ENCODE measurements at regions of chr15 and their contacts with region 1.

Region 1: DNA sequence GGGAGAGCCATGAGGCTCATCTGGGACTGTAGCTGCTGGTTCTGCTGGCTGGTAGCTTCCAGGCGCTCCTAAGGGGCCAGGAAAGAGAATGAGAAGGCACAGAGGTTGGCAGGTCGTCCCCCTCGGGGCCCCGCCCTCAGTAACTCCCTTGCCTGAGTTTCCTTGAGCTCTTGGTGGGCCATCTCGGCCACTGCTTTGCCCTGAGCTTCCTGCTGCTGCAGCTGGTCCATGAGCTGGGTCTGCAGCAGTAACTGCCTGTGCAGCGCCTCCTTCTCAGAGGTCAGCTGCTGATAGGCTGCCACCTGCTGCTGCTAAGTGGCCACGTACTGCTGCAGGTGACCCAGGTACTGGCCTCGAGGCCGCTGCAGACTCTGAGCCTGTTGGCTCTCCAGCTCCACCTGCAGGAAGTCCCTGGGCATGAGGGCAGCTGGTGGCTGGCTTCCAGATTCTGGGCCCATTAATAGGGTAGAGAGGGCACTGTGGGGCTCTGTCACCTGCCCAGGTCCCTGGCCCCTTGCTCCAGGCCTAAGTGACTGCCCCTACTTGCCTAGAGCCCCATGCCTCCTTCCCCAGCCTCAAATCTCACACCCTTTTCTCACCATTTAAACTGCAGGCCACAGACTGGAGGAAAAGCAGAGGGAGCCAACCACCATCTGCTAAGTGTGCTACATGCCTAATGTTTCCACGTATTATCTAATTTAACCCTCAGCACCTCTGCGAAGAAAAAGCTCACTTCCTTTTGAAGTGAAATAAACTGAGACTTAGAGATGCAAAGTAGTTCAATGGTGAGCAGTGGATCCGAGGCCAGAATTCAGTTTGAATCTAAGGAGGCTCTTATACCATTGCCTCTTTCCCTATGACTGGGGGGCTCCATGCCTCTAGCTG is 10.8 kb upstream of the VPS33B start:
- DNase-seq: peak; percentile 76
- ATAC-seq: peak; percentile 89
- H3K4me3 Mint-ChIP-seq: no peak overlapping the region
- H3K27ac Mint-ChIP-seq: no peak overlapping the region
- H3K4me1 Mint-ChIP-seq: no peaks in the 10 kb centered on the region
- H3K27me3 Mint-ChIP-seq: no peaks in the 10 kb centered on the region
- CTCF ChIP-seq: peak; percentile 61

Region 2: GRCh38 chr15:91007266-91007665 is 25.9 kb before region 1 on chr15:
- CTCF ChIA-PET with region 1: interaction called, 13 read pairs
- POLR2A ChIA-PET with region 1: no interaction called
- intact Hi-C with region 1: no loop called
- DNase-seq: no peak
- ATAC-seq: no peak
- H3K4me3 Mint-ChIP-seq: no peak overlapping the region
- H3K27ac Mint-ChIP-seq: no peak overlapping the region
- H3K4me1 Mint-ChIP-seq: no peaks in the 10 kb centered on the region
- H3K27me3 Mint-ChIP-seq: no peaks in the 10 kb centered on the region
- CTCF ChIP-seq: no peak

Region 3: DNA sequence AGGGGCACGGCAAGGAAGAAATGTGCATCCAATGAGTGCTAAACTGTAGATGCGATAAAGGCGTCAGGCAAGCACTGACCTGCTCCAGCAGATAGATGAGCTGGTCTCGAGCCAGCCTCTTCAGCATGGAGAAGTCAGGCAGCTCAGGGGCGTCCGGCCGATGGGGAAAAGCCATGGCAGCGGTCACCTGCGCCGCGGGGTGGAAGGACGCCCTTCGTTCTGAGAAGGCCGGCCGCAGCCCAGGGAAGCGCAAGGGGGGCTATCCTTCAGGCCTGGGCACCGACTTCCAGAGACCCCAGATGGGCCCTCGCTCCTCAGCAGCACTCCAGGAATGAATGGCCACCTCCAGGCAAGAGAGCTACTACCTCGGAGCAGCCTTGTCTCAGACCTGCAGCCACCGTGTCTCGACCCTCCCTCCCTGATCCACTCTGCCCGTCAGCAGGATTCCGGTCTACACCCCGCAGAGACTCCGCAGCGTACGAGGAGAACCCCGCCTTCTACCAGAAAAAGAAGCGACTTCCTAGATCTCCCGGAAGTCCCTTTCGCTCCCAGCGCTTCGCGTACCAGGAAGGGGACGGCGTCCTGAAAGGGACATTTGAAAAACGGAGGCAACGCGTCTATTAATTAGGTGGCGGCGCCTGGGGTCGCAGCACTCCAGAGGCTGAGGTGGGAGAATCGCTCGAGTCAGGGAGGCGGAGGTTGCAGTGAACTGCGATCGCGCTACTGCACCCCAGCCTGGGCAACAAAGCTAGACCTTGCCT is 10.9 kb before region 1 on chr15 and contains the start of gene VPS33B:
- CTCF ChIA-PET with region 1: interaction called, 22 read pairs
- POLR2A ChIA-PET with region 1: interaction called, 4 read pairs
- intact Hi-C with region 1: no loop called
- DNase-seq: peak; percentile 82
- ATAC-seq: peak; percentile 81
- H3K4me3 Mint-ChIP-seq: peak within 1 kb of the TSS; percentile 83
- H3K27ac Mint-ChIP-seq: peak within 1 kb of the TSS; percentile 90
- H3K4me1 Mint-ChIP-seq: peaks cover 30% of the 10 kb centered on the region
- H3K27me3 Mint-ChIP-seq: no peaks in the 10 kb centered on the region
- CTCF ChIP-seq: no peak
- total RNA-seq, gene VPS33B: 22.2 to 22.9 TPM

Region 4: DNA sequence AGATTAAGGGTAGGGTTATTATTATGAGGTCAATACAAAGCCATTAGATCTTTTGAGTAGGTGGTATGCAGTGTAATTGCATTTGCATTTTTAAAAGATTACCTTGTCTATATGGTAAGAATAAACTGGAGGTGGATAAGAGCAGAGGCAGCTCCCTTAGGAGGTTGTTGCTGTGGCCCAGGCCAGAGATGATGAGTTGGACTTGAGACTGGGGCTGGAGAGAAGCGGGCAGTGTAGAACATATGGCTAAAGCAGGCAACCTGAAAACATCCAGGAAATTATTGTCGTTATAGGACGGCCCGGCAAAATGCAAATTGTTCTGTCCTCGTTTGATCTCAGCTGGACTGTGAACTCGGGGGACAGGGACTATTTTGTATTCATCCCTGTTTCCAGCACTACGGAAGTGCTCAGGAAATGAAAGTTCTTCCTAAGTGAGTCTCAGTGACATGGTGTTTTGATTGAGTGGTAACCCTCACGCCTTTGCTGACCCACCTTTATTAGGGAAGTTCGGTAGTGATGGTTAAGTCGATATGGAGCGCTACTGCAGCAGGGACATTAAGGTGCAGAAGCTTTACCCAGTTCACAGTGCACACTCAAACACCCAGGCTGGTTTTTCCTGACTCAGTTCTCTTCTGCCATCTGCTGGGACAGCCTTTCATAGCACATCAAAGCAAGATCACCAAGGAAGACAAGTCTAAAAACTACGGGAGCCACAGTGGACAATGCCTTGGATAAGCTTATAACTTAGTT is 16.4 kb after region 1 on chr15:
- CTCF ChIA-PET with region 1: interaction called, 10 read pairs
- POLR2A ChIA-PET with region 1: no interaction called
- intact Hi-C with region 1: no loop called
- DNase-seq: peak; percentile 71
- ATAC-seq: peak; percentile 93
- H3K4me3 Mint-ChIP-seq: no peak overlapping the region
- H3K27ac Mint-ChIP-seq: no peak overlapping the region
- H3K4me1 Mint-ChIP-seq: peaks cover 12% of the 10 kb centered on the region
- H3K27me3 Mint-ChIP-seq: peaks cover 4% of the 10 kb centered on the region
- CTCF ChIP-seq: peak; percentile 49

Region 5: GRCh38 chr15:91126080-91126479 is 92.9 kb after region 1 on chr15:
- CTCF ChIA-PET with region 1: no interaction called
- POLR2A ChIA-PET with region 1: no interaction called
- intact Hi-C with region 1: no loop called
- DNase-seq: no peak
- ATAC-seq: no peak
- H3K4me3 Mint-ChIP-seq: no peak overlapping the region
- H3K27ac Mint-ChIP-seq: no peak overlapping the region
- H3K4me1 Mint-ChIP-seq: no peaks in the 10 kb centered on the region
- H3K27me3 Mint-ChIP-seq: peaks cover 26% of the 10 kb centered on the region
- CTCF ChIP-seq: no peak

Region 6: GRCh38 chr15:91142114-91142731 is 109.1 kb after region 1 on chr15:
- CTCF ChIA-PET with region 1: no interaction called
- POLR2A ChIA-PET with region 1: no interaction called
- intact Hi-C with region 1: no loop called
- DNase-seq: no peak
- ATAC-seq: no peak
- H3K4me3 Mint-ChIP-seq: no peak overlapping the region
- H3K27ac Mint-ChIP-seq: no peak overlapping the region
- H3K4me1 Mint-ChIP-seq: no peaks in the 10 kb centered on the region
- H3K27me3 Mint-ChIP-seq: peaks cover 18% of the 10 kb centered on the region
- CTCF ChIP-seq: peak; percentile 68